Transverse colon (tissue), 4 donors: ENCODE measurements at regions of chr14 and their contacts with region 1.

Region 1: DNA sequence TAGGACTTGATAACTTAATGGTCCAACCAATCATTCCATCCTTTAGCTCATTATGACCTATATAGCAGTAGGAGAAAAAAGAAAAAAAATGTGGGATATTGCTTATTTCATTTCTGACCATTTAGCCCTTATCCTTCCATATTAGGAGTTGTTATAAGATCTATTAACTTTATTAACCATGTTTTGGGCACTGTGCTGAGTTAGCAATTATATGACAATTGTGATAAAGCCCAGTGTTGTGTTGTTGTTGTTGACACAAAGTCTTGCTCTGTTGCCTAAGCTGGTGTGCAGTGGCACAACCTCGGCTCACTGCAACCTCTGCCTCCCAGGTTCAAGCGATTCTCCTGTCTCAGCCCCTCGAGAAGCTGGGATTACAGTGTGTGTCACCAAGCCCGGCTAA is 569.7 kb upstream of the FOXG1 start:
- DNase-seq: no peak
- H3K4me3 ChIP-seq: no peak overlapping the region
- H3K27ac ChIP-seq: no peak overlapping the region
- H3K4me1 ChIP-seq: no peaks in the 10 kb centered on the region
- H3K27me3 ChIP-seq: no peaks in the 10 kb centered on the region
- CTCF ChIP-seq: no peak
- EP300 ChIP-seq: no peak
- POLR2A ChIP-seq: no peak

Region 2: DNA sequence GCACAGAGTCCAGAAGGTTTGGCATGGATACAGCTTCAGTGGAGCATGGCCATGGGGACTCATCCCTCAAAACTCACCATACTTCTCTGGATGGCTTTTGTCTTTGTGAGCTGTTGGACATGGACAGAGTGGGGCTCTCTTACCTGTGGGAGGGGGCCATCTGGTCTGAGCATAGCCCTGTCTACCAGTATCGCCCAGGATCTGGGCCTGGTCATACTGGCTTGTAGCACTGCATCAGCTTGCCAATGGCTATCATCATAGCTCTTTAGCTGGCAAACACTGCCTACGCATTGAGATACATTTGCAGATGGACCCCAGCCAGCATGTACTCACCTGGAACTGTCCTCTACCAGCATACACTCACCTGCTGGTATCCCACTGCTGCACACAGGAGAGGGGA is 623.9 kb before region 1 on chr14:
- in situ Hi-C with region 1: no loop called
- intact Hi-C with region 1: no loop called
- DNase-seq: no peak
- H3K4me3 ChIP-seq: no peak overlapping the region
- H3K27ac ChIP-seq: no peak overlapping the region
- H3K4me1 ChIP-seq: no peaks in the 10 kb centered on the region
- H3K27me3 ChIP-seq: no peaks in the 10 kb centered on the region
- CTCF ChIP-seq: no peak
- EP300 ChIP-seq: no peak
- POLR2A ChIP-seq: no peak

Region 3: DNA sequence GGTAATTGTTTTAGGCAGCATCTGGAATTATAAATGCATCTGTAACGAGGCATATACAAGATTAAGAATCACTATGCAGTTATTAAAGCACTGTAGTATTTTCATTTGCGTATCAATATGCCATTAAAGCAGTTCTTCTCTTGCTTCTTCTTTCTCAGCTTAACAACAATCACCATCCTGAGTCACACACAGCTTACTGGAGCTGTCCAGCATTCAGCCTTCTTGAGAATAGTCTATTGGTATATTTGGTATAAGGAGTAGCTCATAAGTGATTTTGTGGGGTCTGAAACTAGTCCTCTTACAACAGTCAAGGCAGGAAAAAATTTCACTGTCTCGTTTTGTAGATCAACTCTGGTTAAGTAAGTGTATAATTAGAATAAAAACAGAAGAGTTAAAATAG is 46.7 kb after region 1 on chr14:
- in situ Hi-C with region 1: no loop called
- intact Hi-C with region 1: loop called (anchors 2 kb)
- DNase-seq: no peak
- H3K4me3 ChIP-seq: no peak overlapping the region
- H3K27ac ChIP-seq: no peak overlapping the region
- H3K4me1 ChIP-seq: no peaks in the 10 kb centered on the region
- H3K27me3 ChIP-seq: no peaks in the 10 kb centered on the region
- CTCF ChIP-seq: no peak
- EP300 ChIP-seq: no peak
- POLR2A ChIP-seq: no peak

Region 4: GRCh38 chr14:28254768-28255167 is 57.9 kb after region 1 on chr14:
- in situ Hi-C with region 1: no loop called
- intact Hi-C with region 1: no loop called
- DNase-seq: no peak
- H3K4me3 ChIP-seq: no peak overlapping the region
- H3K27ac ChIP-seq: no peak overlapping the region
- H3K4me1 ChIP-seq: no peaks in the 10 kb centered on the region
- H3K27me3 ChIP-seq: no peaks in the 10 kb centered on the region
- CTCF ChIP-seq: no peak
- EP300 ChIP-seq: no peak
- POLR2A ChIP-seq: no peak

Region 5: GRCh38 chr14:28294834-28295440 is 98.1 kb after region 1 on chr14:
- in situ Hi-C with region 1: no loop called
- intact Hi-C with region 1: no loop called
- DNase-seq: no peak
- H3K4me3 ChIP-seq: no peak overlapping the region
- H3K27ac ChIP-seq: no peak overlapping the region
- H3K4me1 ChIP-seq: no peaks in the 10 kb centered on the region
- H3K27me3 ChIP-seq: no peaks in the 10 kb centered on the region
- CTCF ChIP-seq: peak in 1 of 5 experiments; percentile 13
- EP300 ChIP-seq: no peak
- POLR2A ChIP-seq: no peak